ENCODE measurements at regions of chr3 and their contacts with region 1.

Region 1: GRCh38 chr3:138389841-138390586 is 41.6 kb downstream of the MRAS start:
- DNase-seq: peak; percentile 4
- H3K4me3 ChIP-seq: no peak overlapping the region
- H3K27ac ChIP-seq: no peak overlapping the region
- H3K4me1 ChIP-seq: no peaks in the 10 kb centered on the region
- H3K27me3 ChIP-seq: no peaks in the 10 kb centered on the region
- CTCF ChIP-seq: no peak

Region 2: DNA sequence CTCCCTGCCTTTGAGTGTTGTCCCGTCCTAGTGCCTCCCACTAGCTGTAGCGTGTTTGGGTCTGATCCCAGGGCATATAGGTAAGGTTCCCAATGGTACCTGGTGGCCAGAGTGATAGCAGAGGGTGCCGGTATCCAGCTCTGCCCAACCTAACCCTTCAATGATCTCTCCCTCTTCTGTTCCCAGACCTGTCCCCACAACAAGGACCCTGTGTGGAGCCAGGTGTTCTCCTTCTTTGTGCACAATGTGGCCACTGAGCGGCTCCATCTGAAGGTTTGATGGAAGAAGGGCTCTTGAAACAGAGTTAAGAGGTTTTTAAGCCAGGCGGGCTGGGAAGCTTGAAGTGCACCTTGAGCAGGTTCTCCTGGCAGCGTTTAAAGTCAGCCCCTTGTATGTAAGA is 79.9 kb after region 1 on chr3:
- CTCF ChIA-PET with region 1: interaction called, 27 read pairs
- POLR2A ChIA-PET with region 1: no interaction called
- intact Hi-C with region 1: no loop called
- DNase-seq: no peak
- H3K4me3 ChIP-seq: no peak overlapping the region
- H3K27ac ChIP-seq: no peak overlapping the region
- H3K4me1 ChIP-seq: no peaks in the 10 kb centered on the region
- H3K27me3 ChIP-seq: no peaks in the 10 kb centered on the region
- CTCF ChIP-seq: no peak